Activated CD8-positive, alpha-beta T cell treated with anti-CD3 and anti-CD28 coated beads for 36 hours (primary cell): ENCODE measurements at regions of chr12 and their contacts with region 1.

Region 1: DNA sequence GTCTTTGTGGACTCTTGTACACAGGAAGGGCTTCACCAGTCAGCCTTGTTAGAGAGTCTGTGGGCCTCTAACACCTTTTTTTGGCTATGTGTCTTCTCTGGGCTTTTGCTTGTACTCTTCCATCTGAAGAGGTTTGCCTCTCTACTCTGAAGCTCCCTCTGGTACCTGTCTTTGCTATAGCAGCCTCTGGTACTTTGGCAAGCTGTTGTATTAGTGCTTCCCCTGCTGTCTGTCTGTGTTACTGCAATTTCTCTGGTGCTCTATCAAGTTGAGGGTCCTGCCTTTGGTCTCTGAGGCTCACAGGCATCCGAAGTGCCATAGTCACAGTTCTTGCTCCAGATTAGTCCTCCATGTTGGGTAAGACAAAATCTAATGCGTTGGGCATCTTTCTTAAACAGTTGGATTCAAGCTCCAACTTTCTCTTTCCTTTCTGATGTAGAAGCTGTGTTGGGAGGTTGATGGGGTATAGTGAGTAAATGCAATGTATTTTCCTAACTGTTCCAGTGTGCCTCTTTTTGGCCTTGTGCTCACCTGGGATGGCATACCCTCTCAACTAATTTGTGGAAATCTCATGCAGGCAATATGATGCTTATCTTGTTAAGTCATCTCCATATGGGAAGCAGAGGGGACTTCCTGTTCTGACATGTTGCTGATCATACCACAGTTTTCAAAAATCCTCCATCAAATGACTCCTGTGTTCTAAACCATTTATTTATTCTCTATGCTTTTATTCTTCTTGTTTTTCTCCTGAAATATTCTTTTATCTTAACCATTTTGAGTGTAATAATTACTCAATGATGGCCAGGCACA is 88.8 kb downstream of the ATF7IP start:
- DNase-seq: peak; percentile 49
- ATAC-seq: peak; percentile 96
- H3K4me3 Mint-ChIP-seq: no peak overlapping the region
- H3K27ac Mint-ChIP-seq: peak overlapping the region; percentile 75
- H3K4me1 Mint-ChIP-seq: peaks cover 60% of the 10 kb centered on the region
- H3K27me3 Mint-ChIP-seq: no peaks in the 10 kb centered on the region
- CTCF ChIP-seq: peak; percentile 68

Region 2: DNA sequence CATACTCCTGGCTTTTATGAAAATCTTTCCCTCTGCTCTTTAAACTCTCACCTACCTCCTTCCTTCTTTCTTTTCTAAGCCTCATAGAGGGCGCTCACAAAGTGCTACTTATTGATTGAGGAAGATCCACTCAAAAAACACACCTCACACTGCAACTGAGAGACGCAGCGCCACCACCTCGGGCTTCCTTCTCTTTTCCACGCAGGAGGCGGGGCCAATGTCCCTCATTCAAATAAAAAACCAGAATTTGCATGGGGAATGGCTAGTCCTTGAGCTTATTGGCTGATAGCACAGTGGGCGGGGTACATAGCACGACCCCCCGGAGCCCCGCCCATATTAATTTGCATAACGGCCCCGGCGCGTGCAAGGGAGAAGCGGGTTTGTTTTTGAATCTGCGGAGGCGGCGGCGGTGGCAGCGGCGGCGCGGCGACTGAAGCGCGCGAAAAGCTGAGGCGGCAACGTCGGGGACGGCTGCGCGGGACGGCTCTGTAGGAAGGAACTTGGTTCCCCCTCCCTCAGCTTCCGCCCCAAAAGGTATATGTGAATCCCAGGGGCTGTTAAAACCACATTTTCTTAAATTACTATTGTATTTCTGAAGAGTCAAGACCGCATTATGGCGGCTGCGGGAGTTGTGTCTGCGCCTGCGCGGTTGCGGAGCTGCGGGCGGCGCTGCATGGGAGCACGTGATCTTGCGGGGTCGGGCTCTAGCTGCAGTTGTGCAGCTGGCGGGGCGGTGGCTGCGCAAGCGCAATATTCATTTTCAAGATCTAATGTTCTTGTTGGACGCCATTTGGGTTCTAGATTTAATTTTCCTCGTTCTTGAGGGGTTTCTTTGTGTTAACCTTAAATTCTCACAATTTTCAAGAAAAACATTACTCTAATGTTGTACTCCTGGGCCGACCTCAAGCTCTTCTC is 88.8 kb before region 1 on chr12 and contains the start of gene ATF7IP:
- CTCF ChIA-PET with region 1: interaction called, 11 read pairs
- POLR2A ChIA-PET with region 1: interaction called, 4 read pairs
- intact Hi-C with region 1: no loop called
- DNase-seq: peak; percentile 98
- ATAC-seq: peak; percentile 88
- H3K4me3 Mint-ChIP-seq: peak within 1 kb of the TSS; percentile 75
- H3K27ac Mint-ChIP-seq: peak within 1 kb of the TSS; percentile 97
- H3K4me1 Mint-ChIP-seq: peaks cover 31% of the 10 kb centered on the region
- H3K27me3 Mint-ChIP-seq: no peaks in the 10 kb centered on the region
- CTCF ChIP-seq: peak; percentile 32
- total RNA-seq, gene ATF7IP: 101 to 107 TPM

Region 3: DNA sequence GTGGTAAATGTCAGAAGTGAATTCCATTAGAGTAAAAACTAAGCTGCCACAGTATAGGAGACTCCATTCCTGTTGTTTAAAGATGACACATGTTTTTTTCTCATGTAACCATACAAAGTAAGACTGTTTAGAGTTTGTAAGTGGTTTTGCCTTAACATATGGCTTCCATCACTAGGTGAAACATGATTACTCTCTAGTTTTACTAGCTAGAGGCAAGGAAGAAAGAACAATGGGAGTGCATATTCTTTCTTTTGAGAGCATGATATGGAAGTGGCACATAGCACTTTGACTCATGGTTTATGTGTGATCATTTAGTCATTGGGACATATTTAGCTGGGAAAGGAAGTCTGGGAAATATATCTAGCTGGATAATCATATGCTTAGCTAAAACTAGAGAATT is 81.1 kb before region 1 on chr12:
- CTCF ChIA-PET with region 1: interaction called, 16 read pairs
- POLR2A ChIA-PET with region 1: no interaction called
- intact Hi-C with region 1: no loop called
- DNase-seq: no peak
- ATAC-seq: peak; percentile 17
- H3K4me3 Mint-ChIP-seq: peak overlapping the region; percentile 47
- H3K27ac Mint-ChIP-seq: peak overlapping the region; percentile 90
- H3K4me1 Mint-ChIP-seq: peaks cover 59% of the 10 kb centered on the region
- H3K27me3 Mint-ChIP-seq: no peaks in the 10 kb centered on the region
- CTCF ChIP-seq: no peak

Region 4: DNA sequence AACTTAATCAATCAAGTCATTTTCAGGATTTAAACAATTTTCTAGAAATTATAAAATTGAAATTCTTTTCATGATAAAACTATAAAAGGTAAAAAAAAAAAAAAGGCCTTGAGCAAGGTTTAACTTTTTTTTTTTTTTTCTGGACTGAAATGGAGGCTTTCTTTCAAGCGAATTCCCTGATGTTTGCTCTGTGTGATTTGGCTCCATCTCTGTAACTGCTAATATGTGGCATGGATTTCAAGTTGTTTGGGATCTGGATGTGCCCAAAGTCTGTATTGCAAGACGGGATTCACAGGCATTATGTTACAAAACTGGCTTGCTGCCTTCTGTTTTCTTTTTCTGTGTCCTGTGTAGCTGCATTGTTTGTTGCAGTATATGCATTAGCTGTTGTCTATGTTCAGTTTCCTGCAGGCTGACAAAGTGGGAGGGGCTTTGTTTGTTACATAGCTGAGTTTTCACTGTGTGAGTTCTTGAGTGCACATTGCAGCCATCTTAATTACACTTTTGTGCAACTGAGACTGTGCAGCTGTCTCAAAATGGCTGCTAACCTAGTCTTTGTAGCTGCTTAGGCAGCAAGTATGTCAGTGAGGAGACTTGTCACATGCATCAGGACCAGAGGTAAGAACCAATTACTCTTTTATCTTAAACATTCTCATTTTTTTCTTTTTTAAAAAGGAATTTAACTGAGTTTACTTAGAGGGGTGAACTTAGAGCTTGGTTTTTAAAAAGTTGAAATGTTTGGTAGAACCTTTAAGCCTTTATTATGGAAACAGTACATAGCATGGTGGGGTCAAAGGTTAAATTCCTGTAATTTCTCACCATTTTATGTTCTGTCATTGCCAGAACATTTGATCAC is 69.3 kb before region 1 on chr12:
- CTCF ChIA-PET with region 1: interaction called, 5 read pairs
- POLR2A ChIA-PET with region 1: no interaction called
- intact Hi-C with region 1: loop called (anchors 2 kb)
- DNase-seq: peak; percentile 81
- ATAC-seq: peak; percentile 95
- H3K4me3 Mint-ChIP-seq: peak overlapping the region; percentile 74
- H3K27ac Mint-ChIP-seq: peak overlapping the region; percentile 96
- H3K4me1 Mint-ChIP-seq: peaks cover 56% of the 10 kb centered on the region
- H3K27me3 Mint-ChIP-seq: no peaks in the 10 kb centered on the region
- CTCF ChIP-seq: no peak

Region 5: GRCh38 chr12:14427929-14428328 is 26.4 kb before region 1 on chr12:
- CTCF ChIA-PET with region 1: interaction called, 13 read pairs
- POLR2A ChIA-PET with region 1: no interaction called
- intact Hi-C with region 1: no loop called
- DNase-seq: no peak
- ATAC-seq: no peak
- H3K4me3 Mint-ChIP-seq: no peak overlapping the region
- H3K27ac Mint-ChIP-seq: peak overlapping the region; percentile 38
- H3K4me1 Mint-ChIP-seq: peaks cover 69% of the 10 kb centered on the region
- H3K27me3 Mint-ChIP-seq: no peaks in the 10 kb centered on the region
- CTCF ChIP-seq: no peak

Region 6: DNA sequence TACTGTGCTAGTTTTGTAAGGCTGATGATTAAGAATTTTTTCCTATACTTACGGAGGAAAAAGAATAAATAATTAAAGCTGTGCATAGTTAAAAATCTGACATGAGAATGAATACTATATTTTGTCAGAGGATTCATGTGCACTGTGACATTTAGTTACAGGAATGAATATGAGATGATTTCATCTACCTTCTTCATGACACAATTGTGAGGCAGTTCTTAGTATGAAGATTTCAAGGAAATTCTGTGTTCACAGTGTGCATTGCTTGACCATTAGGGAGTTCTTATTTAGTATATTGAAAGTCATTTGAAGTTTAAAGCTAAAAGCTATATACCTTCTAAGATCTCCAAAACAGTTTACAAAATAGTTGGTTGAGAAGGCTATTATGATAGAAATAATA is 18.7 kb before region 1 on chr12:
- CTCF ChIA-PET with region 1: interaction called, 14 read pairs
- POLR2A ChIA-PET with region 1: no interaction called
- intact Hi-C with region 1: no loop called
- DNase-seq: no peak
- ATAC-seq: peak; percentile 53
- H3K4me3 Mint-ChIP-seq: no peak overlapping the region
- H3K27ac Mint-ChIP-seq: no peak overlapping the region
- H3K4me1 Mint-ChIP-seq: peaks cover 42% of the 10 kb centered on the region
- H3K27me3 Mint-ChIP-seq: no peaks in the 10 kb centered on the region
- CTCF ChIP-seq: no peak

Region 7: DNA sequence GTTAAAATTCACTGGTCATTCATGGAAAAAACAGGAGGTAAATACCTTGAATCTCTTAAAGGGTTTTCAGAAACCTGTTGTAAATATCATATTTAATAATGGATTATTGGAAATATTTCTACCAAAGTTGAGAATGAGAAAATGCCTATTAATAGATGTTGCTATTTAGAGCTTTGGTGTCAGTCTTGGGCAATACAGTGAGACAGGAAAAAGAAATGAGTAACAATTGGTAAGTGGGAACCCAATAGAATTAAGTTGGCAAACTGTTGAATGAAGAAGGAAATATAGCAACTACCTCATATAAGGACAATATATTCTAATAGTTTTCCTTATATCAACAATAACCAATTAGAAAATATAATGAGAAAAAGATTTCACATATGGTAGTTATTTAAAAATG is 10.8 kb before region 1 on chr12:
- CTCF ChIA-PET with region 1: interaction called, 12 read pairs
- POLR2A ChIA-PET with region 1: no interaction called
- intact Hi-C with region 1: no loop called
- DNase-seq: no peak
- ATAC-seq: no peak
- H3K4me3 Mint-ChIP-seq: no peak overlapping the region
- H3K27ac Mint-ChIP-seq: no peak overlapping the region
- H3K4me1 Mint-ChIP-seq: peaks cover 24% of the 10 kb centered on the region
- H3K27me3 Mint-ChIP-seq: no peaks in the 10 kb centered on the region
- CTCF ChIP-seq: no peak